ENCODE measurements at regions of chr9 and their contacts with region 1.

Region 1: DNA sequence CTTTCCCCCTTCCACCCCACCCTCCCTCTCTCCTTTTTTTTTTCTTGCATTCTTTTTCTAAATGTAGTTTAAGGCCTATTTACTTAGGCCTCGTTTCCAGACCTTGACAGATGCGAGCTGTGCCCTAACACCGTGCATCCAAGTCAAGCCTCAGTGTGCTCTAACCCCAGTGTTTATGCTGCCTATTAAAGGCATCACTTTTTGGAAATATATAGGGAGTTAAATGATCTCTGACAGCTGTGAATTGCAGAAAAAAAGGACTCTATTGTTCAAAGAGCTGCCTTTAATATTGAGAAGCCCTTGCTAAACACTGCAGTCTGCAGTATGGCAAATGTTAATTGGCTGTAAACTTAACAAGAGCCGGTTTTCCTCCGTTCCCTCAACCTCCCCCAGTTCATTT is 270.4 kb upstream of the TUT7 start:
- DNase-seq: no peak
- H3K4me3 ChIP-seq: no peak overlapping the region
- H3K27ac ChIP-seq: no peak overlapping the region
- H3K4me1 ChIP-seq: no peaks in the 10 kb centered on the region
- H3K27me3 ChIP-seq: no peaks in the 10 kb centered on the region

Region 2: GRCh38 chr9:86939321-86939720 is 314.7 kb after region 1 on chr9:
- in situ Hi-C with region 1: loop called (anchors 10 kb)
- DNase-seq: no peak
- H3K4me3 ChIP-seq: no peak overlapping the region
- H3K27ac ChIP-seq: no peak overlapping the region
- H3K4me1 ChIP-seq: peaks cover 9% of the 10 kb centered on the region
- H3K27me3 ChIP-seq: no peaks in the 10 kb centered on the region